ENCODE measurements at regions of chr6 and their contacts with region 1.

Region 1: GRCh38 chr6:47134476-47135189 is 92.5 kb upstream of the ADGRF1 start:
- DNase-seq: peak; percentile 46 to 98
- H3K4me3 ChIP-seq: peak overlapping the region; percentile 43; the same call in 1 of the 2 replicates
- H3K27ac ChIP-seq: peak overlapping the region; percentile 100
- H3K4me1 ChIP-seq: peaks cover 73% of the 10 kb centered on the region
- H3K27me3 ChIP-seq: no peaks in the 10 kb centered on the region
- CTCF ChIP-seq: no peak

Region 2: DNA sequence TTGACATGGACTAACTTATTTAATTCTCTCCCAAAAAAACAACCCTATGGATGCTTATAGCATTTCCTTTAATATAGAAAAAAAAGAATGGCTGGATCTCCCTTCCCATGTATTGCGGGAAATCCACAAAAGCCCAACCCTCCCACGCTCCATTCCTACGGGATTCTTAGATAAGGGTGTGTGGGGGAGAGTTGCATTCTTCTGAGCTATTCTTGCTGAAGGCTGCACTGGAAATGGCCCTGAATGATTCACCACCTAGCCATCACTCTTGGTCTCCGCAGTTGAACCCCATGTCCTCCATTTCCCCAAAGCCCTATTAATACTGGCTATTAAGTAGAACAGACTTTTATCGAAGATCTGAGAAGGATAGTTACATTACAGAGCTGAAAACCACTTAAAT is 171.0 kb before region 1 on chr6:
- CTCF ChIA-PET with region 1: no interaction called
- POLR2A ChIA-PET with region 1: no interaction called
- intact Hi-C with region 1: no loop called
- DNase-seq: no peak
- H3K4me3 ChIP-seq: no peak overlapping the region
- H3K27ac ChIP-seq: no peak overlapping the region
- H3K4me1 ChIP-seq: no peaks in the 10 kb centered on the region; the same call in 1 of the 2 replicates
- H3K27me3 ChIP-seq: no peaks in the 10 kb centered on the region
- CTCF ChIP-seq: no peak

Region 3: DNA sequence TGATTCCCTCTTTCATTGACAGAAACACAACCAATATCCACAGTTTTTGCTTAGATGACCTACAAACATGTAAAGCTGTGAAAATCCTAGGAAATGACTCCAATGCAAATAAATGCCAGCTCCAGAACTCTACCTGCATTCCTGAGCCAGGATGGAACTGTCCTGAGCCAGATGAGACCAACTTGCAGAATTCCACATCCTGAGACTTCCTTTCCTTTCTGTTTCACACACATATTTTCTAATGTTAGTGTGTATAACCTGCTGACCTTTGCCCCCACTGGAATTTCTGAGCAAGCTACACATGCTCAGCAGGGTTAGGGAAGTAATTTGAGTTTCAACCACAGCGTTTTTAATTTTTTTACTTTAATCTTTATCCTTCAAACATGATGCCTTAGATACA is 22.9 kb before region 1 on chr6:
- CTCF ChIA-PET with region 1: no interaction called
- POLR2A ChIA-PET with region 1: interaction called, 15 read pairs
- intact Hi-C with region 1: loop called (anchors 1 kb)
- DNase-seq: peak; percentile 71 to 96
- H3K4me3 ChIP-seq: no peak overlapping the region
- H3K27ac ChIP-seq: peak overlapping the region; percentile 98
- H3K4me1 ChIP-seq: peaks cover 95% of the 10 kb centered on the region
- H3K27me3 ChIP-seq: no peaks in the 10 kb centered on the region
- CTCF ChIP-seq: no peak

Region 4: DNA sequence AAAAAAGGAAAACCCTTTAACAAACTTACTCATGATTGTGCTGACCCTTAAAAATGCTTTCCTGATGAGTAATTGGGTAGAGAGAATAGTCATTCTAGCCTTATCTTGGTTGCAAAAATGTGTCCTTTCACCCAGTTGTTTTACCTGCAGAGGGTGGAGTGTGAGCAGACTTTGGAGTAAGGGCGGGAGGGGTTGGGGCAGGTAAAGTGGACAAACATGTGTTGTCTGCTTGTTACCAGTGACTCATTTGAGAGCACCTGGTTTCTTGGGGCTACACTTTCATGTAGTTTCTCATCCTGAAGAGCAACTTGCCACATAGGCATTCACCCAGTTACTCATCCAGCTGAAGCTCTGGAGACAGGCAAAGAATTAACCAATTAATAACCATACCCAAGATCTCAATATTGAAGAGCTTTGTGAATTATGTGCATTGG is 54.0 kb after region 1 on chr6:
- CTCF ChIA-PET with region 1: no interaction called
- POLR2A ChIA-PET with region 1: interaction called, 4 read pairs
- intact Hi-C with region 1: loop called (anchors 1 kb)
- DNase-seq: peak; percentile 71 to 99
- H3K4me3 ChIP-seq: 0 out of 2 replicates have a peak overlapping the region, but pooled peaks have one; percentile 2
- H3K27ac ChIP-seq: peak overlapping the region; percentile 93
- H3K4me1 ChIP-seq: peaks cover 56% of the 10 kb centered on the region
- H3K27me3 ChIP-seq: no peaks in the 10 kb centered on the region
- CTCF ChIP-seq: no peak